Dorsolateral prefrontal cortex (tissue), 120 donors: ENCODE measurements at regions of chr16 and their contacts with region 1.

Region 1: DNA sequence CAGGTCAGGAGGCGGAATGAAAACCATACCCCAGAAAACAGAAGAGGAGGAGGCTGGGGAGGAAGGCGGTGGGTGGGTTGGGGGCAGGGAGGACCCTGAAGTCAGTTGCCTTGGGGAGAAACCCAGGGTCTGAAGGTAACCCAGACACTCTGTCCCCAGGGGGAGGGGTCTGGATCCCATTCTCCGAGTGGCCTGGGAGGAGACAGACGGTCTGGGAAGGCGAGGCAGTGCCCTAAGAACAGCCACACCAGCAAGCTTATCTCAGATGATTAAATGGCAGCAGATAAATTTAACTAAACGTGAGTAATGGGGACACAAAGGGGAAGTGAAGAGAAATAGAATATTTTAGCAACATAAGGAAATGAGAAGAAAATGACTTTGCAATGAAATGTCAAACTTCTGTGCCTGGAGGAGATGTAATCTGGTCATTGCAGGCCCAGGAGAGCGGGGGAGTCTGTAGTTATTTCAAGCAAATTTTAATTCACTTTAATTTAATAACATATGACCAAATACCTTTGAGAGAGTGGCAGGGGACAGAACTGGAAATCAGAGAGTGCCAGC is 21.4 kb upstream of the ZFP90 start:
- DNase-seq: no peak
- H3K4me3 ChIP-seq: no peak overlapping the region
- H3K27ac ChIP-seq: no peak overlapping the region
- H3K27me3 ChIP-seq: no peaks in the 10 kb centered on the region
- CTCF ChIP-seq: no peak

Region 2: GRCh38 chr16:68367030-68367429 is 150.7 kb before region 1 on chr16:
- intact Hi-C with region 1: loop called in 1 of 2 experiments (anchors 10 kb)
- DNase-seq: peak in 2 of 10 donors; percentile 41 to 71
- H3K4me3 ChIP-seq: no peak overlapping the region
- H3K27ac ChIP-seq: no peak overlapping the region
- H3K27me3 ChIP-seq: no peaks in the 10 kb centered on the region
- CTCF ChIP-seq: peak in 52 of 56 donors; percentile 10 to 61 (median 46)

Region 3: GRCh38 chr16:68668266-68668665 is 150.6 kb after region 1 on chr16:
- intact Hi-C with region 1: no loop called
- DNase-seq: no peak
- H3K4me3 ChIP-seq: no peak overlapping the region
- H3K27ac ChIP-seq: no peak overlapping the region
- H3K27me3 ChIP-seq: no peaks in the 10 kb centered on the region
- CTCF ChIP-seq: no peak